Activated naive CD4-positive, alpha-beta T cell treated with anti-CD3 and anti-CD28 coated beads for 36 hours (primary cell): ENCODE measurements at regions of chr10 and their contacts with region 1.

Region 1: GRCh38 chr10:90751107-90751997 is 106.5 kb downstream of the HTR7 start:
- DNase-seq: peak; percentile 68
- H3K4me3 Mint-ChIP-seq: no peak overlapping the region
- H3K27ac Mint-ChIP-seq: no peak overlapping the region
- H3K4me1 Mint-ChIP-seq: no peaks in the 10 kb centered on the region
- H3K27me3 Mint-ChIP-seq: peaks cover 26% of the 10 kb centered on the region

Region 2: DNA sequence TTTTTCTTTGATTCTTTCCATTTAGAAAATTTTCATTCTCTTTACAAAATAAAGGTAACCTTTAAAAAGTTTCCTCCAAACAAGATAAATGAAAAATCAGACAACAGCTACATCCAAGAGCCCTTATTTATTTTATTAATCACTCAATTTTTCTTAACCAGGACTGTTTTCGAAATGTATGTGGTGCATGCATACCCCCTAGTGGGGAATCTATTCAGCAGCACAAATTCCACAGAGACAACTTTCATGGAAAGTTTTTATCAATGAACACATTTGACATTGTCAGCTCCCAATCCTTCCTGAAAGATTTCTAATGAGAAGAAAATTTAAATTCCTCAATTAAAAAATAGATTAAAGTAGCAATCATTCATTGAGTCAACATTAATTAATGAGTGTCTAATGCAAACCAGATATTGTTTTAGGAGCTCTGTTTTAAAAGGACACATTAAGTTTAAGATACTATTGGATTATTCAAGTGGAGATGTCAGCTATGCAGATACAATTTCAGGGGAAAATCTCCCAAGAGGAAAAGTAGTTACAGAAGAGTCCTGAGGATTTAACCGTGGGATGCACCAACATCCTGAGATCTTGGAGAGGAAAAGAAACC is 111.7 kb after region 1 on chr10:
- CTCF ChIA-PET with region 1: interaction called, 6 read pairs
- intact Hi-C with region 1: loop called (anchors 1 kb)
- DNase-seq: peak; percentile 10
- H3K4me3 Mint-ChIP-seq: no peak overlapping the region
- H3K27ac Mint-ChIP-seq: no peak overlapping the region
- H3K4me1 Mint-ChIP-seq: peaks cover 4% of the 10 kb centered on the region
- H3K27me3 Mint-ChIP-seq: peaks cover 28% of the 10 kb centered on the region

Region 3: GRCh38 chr10:91103384-91104192 is 352.2 kb after region 1 on chr10:
- CTCF ChIA-PET with region 1: no interaction called
- intact Hi-C with region 1: no loop called
- DNase-seq: no peak
- H3K4me3 Mint-ChIP-seq: no peak overlapping the region
- H3K27ac Mint-ChIP-seq: no peak overlapping the region
- H3K4me1 Mint-ChIP-seq: no peaks in the 10 kb centered on the region
- H3K27me3 Mint-ChIP-seq: no peaks in the 10 kb centered on the region